ENCODE measurements at regions of chr3 and their contacts with region 1.

Region 1: DNA sequence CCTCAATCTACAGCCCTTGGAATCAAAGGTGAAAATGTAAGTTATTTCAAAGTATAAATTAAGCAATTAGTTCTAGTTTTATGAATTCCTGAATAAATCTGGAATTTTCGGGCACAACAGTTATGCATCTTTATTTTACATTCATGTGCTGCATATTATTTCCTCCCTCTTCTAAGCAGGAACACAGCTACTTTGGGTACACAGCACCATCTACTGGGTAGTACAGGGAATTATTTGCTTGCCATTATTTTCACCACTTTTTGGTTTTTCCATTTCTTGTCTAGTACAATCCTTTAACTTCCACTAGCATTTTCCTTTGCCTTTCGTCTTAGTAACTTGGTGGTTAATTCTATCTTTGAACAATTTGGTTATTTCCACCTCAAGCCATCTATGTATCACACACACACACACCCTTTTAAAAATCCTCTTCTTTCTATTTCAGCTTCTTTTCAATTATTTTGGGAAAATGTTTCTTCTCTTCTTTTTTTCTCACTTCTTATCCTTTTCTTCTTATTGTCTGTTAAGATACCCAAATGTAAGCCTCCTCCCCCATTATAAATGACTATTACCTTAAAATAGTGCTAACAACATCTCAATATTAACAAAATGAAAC is 451.0 kb downstream of the MFSD1 start:
- DNase-seq: no peak
- H3K4me3 ChIP-seq: no peak overlapping the region
- CTCF ChIP-seq: peak; percentile 50

Region 2: GRCh38 chr3:158918008-158918407 is 334.9 kb before region 1 on chr3:
- CTCF ChIA-PET with region 1: interaction called, 82 read pairs
- POLR2A ChIA-PET with region 1: no interaction called
- DNase-seq: peak; percentile 29
- H3K4me3 ChIP-seq: no peak overlapping the region
- CTCF ChIP-seq: peak; percentile 75

Region 3: DNA sequence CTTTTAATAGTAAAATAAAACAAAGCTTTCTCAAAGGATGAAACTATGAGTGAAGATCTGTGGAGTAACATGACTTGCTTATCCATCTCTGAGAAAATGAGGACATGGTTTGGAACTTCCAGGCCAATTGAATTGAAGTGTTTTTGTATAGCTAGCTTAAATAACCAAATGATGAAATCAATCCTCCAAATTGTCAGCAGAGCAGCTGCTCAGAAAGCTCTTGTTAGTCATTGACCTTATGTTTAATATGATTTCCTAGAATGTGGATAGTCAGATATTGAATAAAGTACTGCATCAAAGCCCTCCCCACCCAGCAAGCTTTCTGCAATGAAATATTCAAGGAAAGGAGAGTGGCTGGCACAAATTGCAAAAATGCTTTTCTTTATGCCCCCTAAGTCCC is 13.8 kb before region 1 on chr3:
- CTCF ChIA-PET with region 1: interaction called, 11 read pairs
- POLR2A ChIA-PET with region 1: no interaction called
- DNase-seq: no peak
- H3K4me3 ChIP-seq: no peak overlapping the region
- CTCF ChIP-seq: no peak

Measured in AG04449 (cell line).